GM12878 (cell line): ENCODE measurements at regions of chr2 and their contacts with region 1.

Region 1: DNA sequence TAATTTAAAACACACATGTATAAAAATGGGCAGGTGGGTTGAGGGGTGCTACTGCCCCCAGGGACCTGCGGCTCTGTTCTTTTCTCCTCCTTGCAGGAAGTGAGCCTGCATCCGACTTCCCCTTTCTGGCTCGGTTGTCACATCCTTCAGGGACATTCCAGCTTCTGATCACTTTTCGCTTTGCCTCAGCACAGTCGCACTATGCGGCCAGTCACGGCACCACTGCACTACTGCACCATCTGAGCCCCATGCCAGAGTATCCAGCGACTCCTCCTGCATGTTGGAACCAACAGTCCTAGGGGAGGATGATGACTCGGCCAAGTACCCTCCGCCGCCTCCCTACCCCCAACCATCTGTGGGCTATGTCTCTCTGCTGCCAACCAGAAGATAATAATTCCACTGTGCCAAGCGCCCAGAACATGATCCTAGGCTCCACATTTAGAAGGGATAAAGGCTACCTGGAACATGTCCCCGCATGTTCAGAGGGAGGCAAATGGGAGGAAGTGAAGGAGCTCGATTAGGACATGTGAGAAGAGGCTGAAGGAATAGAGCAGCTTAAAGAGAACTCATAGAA is 17.6 kb downstream of the CDC42EP3 start:
- DNase-seq: peak; percentile 84
- ATAC-seq: peak; percentile 78
- H3K4me3 ChIP-seq: peak overlapping the region; percentile 75
- H3K27ac ChIP-seq: peak overlapping the region; percentile 99
- H3K4me1 ChIP-seq: peaks cover 69% of the 10 kb centered on the region
- H3K27me3 ChIP-seq: no peaks in the 10 kb centered on the region
- CTCF ChIP-seq: no peak
- EP300 ChIP-seq: peak; percentile 91 to 94
- POLR2A ChIP-seq: peak; percentile 93
- RAD21 ChIP-seq: peak; percentile 4; the same call in 1 of the 2 replicates

Region 2: DNA sequence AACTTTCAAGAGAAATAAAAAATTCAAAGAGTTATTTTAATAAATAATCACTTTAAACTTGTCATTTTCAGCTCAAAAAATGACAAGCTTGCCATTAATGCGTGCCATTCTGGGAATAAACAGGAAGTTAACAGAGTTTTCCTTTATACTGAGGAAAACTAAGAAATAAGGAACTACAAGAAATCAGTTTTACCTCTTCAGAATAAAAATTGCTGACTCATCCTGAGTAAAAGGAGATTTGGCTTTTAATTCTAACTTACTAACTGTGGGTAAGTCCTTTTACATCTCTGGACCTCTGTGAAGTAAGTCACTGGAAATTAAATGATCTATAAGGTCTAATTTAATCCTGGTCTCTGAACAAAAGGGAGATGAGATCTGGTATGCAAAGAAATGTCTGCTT is 438.6 kb before region 1 on chr2:
- CTCF ChIA-PET with region 1: no interaction called
- POLR2A ChIA-PET with region 1: no interaction called
- RAD21 ChIA-PET with region 1: no interaction called
- SMC1A ChIA-PET with region 1: no interaction called
- in situ Hi-C with region 1: no loop called
- intact Hi-C with region 1: no loop called
- DNase-seq: no peak
- ATAC-seq: no peak
- H3K4me3 ChIP-seq: no peak overlapping the region
- H3K27ac ChIP-seq: no peak overlapping the region
- H3K4me1 ChIP-seq: no peaks in the 10 kb centered on the region
- H3K27me3 ChIP-seq: no peaks in the 10 kb centered on the region
- CTCF ChIP-seq: no peak
- EP300 ChIP-seq: no peak
- POLR2A ChIP-seq: no peak
- RAD21 ChIP-seq: no peak

Region 3: DNA sequence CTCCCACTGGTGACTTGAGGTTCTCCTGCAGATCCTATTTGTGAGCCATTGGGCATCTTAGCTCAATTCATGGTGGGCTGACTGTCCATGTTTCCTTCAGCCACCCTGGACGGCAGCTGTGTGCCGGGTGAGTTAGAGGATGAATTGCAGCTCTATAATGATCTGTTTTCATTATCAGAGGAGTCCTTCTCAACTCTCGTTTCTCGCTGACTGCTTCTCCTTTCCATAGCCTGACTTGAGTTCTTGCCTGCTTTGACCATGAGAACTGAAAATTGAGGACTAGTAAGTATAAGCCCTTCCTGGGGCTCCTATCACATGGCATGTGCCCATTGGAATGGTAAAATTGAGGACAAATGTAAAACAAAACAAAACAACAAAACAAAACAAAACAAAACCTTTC is 104.3 kb before region 1 on chr2:
- CTCF ChIA-PET with region 1: interaction called, 6 read pairs
- POLR2A ChIA-PET with region 1: interaction called, 4 read pairs
- RAD21 ChIA-PET with region 1: interaction called, 15 read pairs
- SMC1A ChIA-PET with region 1: interaction called, 11 read pairs
- in situ Hi-C with region 1: no loop called
- intact Hi-C with region 1: no loop called
- DNase-seq: no peak
- ATAC-seq: peak; percentile 87
- H3K4me3 ChIP-seq: peak overlapping the region; percentile 4; the same call in 1 of the 2 replicates
- H3K27ac ChIP-seq: peak overlapping the region; percentile 95
- H3K4me1 ChIP-seq: peaks cover 36% of the 10 kb centered on the region
- H3K27me3 ChIP-seq: no peaks in the 10 kb centered on the region
- CTCF ChIP-seq: no peak
- EP300 ChIP-seq: no peak
- POLR2A ChIP-seq: no peak
- RAD21 ChIP-seq: no peak

Region 4: DNA sequence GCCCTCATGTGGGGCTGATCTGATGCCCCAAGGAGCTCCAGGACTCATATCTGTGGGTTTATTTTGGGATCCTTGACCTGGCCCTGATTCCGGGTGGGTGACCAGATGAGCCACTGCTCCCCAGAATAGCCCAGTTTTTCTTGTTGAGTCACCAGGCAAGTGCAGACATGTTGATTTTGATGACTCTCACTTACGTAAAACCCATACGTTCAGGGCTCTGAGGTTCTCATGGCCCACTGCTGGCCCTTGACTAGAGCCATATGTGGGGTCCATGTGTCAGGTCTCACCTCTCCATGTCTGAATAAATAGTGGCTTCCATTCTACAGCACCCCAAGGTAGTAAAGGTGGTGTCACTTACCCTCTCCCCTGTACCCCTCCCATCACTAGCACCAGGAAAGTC is 24.4 kb before region 1 on chr2:
- CTCF ChIA-PET with region 1: interaction called, 14 read pairs
- POLR2A ChIA-PET with region 1: interaction called, 166 read pairs
- RAD21 ChIA-PET with region 1: interaction called, 176 read pairs
- SMC1A ChIA-PET with region 1: interaction called, 147 read pairs
- in situ Hi-C with region 1: no loop called
- intact Hi-C with region 1: loop called (anchors 2 kb)
- DNase-seq: no peak
- ATAC-seq: peak; percentile 32
- H3K4me3 ChIP-seq: no peak overlapping the region
- H3K27ac ChIP-seq: peak overlapping the region; percentile 76
- H3K4me1 ChIP-seq: peaks cover 47% of the 10 kb centered on the region
- H3K27me3 ChIP-seq: no peaks in the 10 kb centered on the region
- CTCF ChIP-seq: no peak
- EP300 ChIP-seq: peak; percentile 35 to 41; a peak in 1 of 4 replicates
- POLR2A ChIP-seq: no peak
- RAD21 ChIP-seq: no peak; the same call in 1 of the 2 replicates

Region 5: GRCh38 chr2:37635504-37636380 is 18.1 kb before region 1 on chr2:
- CTCF ChIA-PET with region 1: interaction called, 7 read pairs
- POLR2A ChIA-PET with region 1: interaction called, 45 read pairs
- RAD21 ChIA-PET with region 1: interaction called, 40 read pairs
- SMC1A ChIA-PET with region 1: interaction called, 35 read pairs
- in situ Hi-C with region 1: no loop called
- intact Hi-C with region 1: loop called (anchors 1 kb)
- DNase-seq: peak; percentile 92
- ATAC-seq: peak; percentile 80
- H3K4me3 ChIP-seq: no peak overlapping the region
- H3K27ac ChIP-seq: peak overlapping the region; percentile 91
- H3K4me1 ChIP-seq: peaks cover 26% of the 10 kb centered on the region
- H3K27me3 ChIP-seq: no peaks in the 10 kb centered on the region
- CTCF ChIP-seq: no peak
- EP300 ChIP-seq: peak; percentile 27 to 69; a peak in 3 of 4 replicates
- POLR2A ChIP-seq: peak; percentile 14
- RAD21 ChIP-seq: peak; percentile 37; the same call in 1 of the 2 replicates

Region 6: GRCh38 chr2:37641582-37642171 is 12.2 kb before region 1 on chr2:
- CTCF ChIA-PET with region 1: interaction called, 7 read pairs
- POLR2A ChIA-PET with region 1: interaction called, 45 read pairs
- RAD21 ChIA-PET with region 1: interaction called, 40 read pairs
- SMC1A ChIA-PET with region 1: interaction called, 21 read pairs
- in situ Hi-C with region 1: no loop called
- intact Hi-C with region 1: no loop called
- DNase-seq: no peak
- ATAC-seq: no peak
- H3K4me3 ChIP-seq: no peak overlapping the region
- H3K27ac ChIP-seq: no peak overlapping the region
- H3K4me1 ChIP-seq: peaks cover 15% of the 10 kb centered on the region
- H3K27me3 ChIP-seq: no peaks in the 10 kb centered on the region
- CTCF ChIP-seq: no peak
- EP300 ChIP-seq: no peak
- POLR2A ChIP-seq: no peak
- RAD21 ChIP-seq: no peak

Region 7: GRCh38 chr2:37665604-37666362 is 11.9 kb after region 1 on chr2:
- CTCF ChIA-PET with region 1: interaction called, 15 read pairs
- POLR2A ChIA-PET with region 1: interaction called, 171 read pairs
- RAD21 ChIA-PET with region 1: interaction called, 127 read pairs
- SMC1A ChIA-PET with region 1: interaction called, 246 read pairs
- in situ Hi-C with region 1: no loop called
- intact Hi-C with region 1: loop called (anchors 2 kb)
- DNase-seq: no peak
- ATAC-seq: peak; percentile 2; the same call in 1 of the 3 replicates
- H3K4me3 ChIP-seq: peak overlapping the region; percentile 82
- H3K27ac ChIP-seq: peak overlapping the region; percentile 28; the same call in 1 of the 2 replicates
- H3K4me1 ChIP-seq: 0 out of 2 replicates have a peak, but pooled peaks cover 3% of the 10 kb centered on the region
- H3K27me3 ChIP-seq: no peaks in the 10 kb centered on the region
- CTCF ChIP-seq: no peak
- EP300 ChIP-seq: no peak
- POLR2A ChIP-seq: no peak
- RAD21 ChIP-seq: no peak

Region 8: GRCh38 chr2:37672104-37672869 is 18.4 kb after region 1 on chr2:
- CTCF ChIA-PET with region 1: interaction called, 15 read pairs
- POLR2A ChIA-PET with region 1: interaction called, 171 read pairs
- RAD21 ChIA-PET with region 1: interaction called, 127 read pairs
- SMC1A ChIA-PET with region 1: interaction called, 246 read pairs
- in situ Hi-C with region 1: no loop called
- intact Hi-C with region 1: loop called (anchors 2 kb)
- DNase-seq: no peak
- ATAC-seq: peak; percentile 58
- H3K4me3 ChIP-seq: peak overlapping the region; percentile 87
- H3K27ac ChIP-seq: peak overlapping the region; percentile 77
- H3K4me1 ChIP-seq: no peaks in the 10 kb centered on the region; the same call in 1 of the 2 replicates
- H3K27me3 ChIP-seq: no peaks in the 10 kb centered on the region
- CTCF ChIP-seq: no peak
- EP300 ChIP-seq: no peak
- POLR2A ChIP-seq: peak; percentile 51; the same call in 1 of the 2 replicates
- RAD21 ChIP-seq: no peak

Region 9: GRCh38 chr2:37753758-37754157 is 99.9 kb after region 1 on chr2:
- CTCF ChIA-PET with region 1: no interaction called
- POLR2A ChIA-PET with region 1: no interaction called
- RAD21 ChIA-PET with region 1: no interaction called
- SMC1A ChIA-PET with region 1: no interaction called
- in situ Hi-C with region 1: no loop called
- intact Hi-C with region 1: no loop called
- DNase-seq: no peak
- ATAC-seq: no peak
- H3K4me3 ChIP-seq: no peak overlapping the region
- H3K27ac ChIP-seq: no peak overlapping the region
- H3K4me1 ChIP-seq: no peaks in the 10 kb centered on the region
- H3K27me3 ChIP-seq: no peaks in the 10 kb centered on the region
- CTCF ChIP-seq: no peak
- EP300 ChIP-seq: no peak
- POLR2A ChIP-seq: no peak
- RAD21 ChIP-seq: no peak

Region 10: GRCh38 chr2:37907501-37908225 is 253.8 kb after region 1 on chr2:
- CTCF ChIA-PET with region 1: no interaction called
- POLR2A ChIA-PET with region 1: no interaction called
- RAD21 ChIA-PET with region 1: no interaction called
- SMC1A ChIA-PET with region 1: no interaction called
- in situ Hi-C with region 1: no loop called
- intact Hi-C with region 1: no loop called
- DNase-seq: no peak
- ATAC-seq: 0 out of 3 replicates have a peak, but pooled peaks have one; percentile 17
- H3K4me3 ChIP-seq: no peak overlapping the region
- H3K27ac ChIP-seq: no peak overlapping the region
- H3K4me1 ChIP-seq: no peaks in the 10 kb centered on the region
- H3K27me3 ChIP-seq: no peaks in the 10 kb centered on the region
- CTCF ChIP-seq: no peak
- EP300 ChIP-seq: no peak
- POLR2A ChIP-seq: no peak
- RAD21 ChIP-seq: no peak

Region 11: GRCh38 chr2:38092196-38092922 is 438.5 kb after region 1 on chr2:
- CTCF ChIA-PET with region 1: no interaction called
- POLR2A ChIA-PET with region 1: no interaction called
- RAD21 ChIA-PET with region 1: no interaction called
- SMC1A ChIA-PET with region 1: no interaction called
- in situ Hi-C with region 1: no loop called
- intact Hi-C with region 1: no loop called
- DNase-seq: no peak
- ATAC-seq: no peak
- H3K4me3 ChIP-seq: no peak overlapping the region
- H3K27ac ChIP-seq: no peak overlapping the region
- H3K4me1 ChIP-seq: peaks cover 20% of the 10 kb centered on the region
- H3K27me3 ChIP-seq: no peaks in the 10 kb centered on the region
- CTCF ChIP-seq: no peak
- EP300 ChIP-seq: no peak
- POLR2A ChIP-seq: no peak
- RAD21 ChIP-seq: no peak